ENCODE measurements at regions of chr9 and their contacts with region 1.

Region 1: DNA sequence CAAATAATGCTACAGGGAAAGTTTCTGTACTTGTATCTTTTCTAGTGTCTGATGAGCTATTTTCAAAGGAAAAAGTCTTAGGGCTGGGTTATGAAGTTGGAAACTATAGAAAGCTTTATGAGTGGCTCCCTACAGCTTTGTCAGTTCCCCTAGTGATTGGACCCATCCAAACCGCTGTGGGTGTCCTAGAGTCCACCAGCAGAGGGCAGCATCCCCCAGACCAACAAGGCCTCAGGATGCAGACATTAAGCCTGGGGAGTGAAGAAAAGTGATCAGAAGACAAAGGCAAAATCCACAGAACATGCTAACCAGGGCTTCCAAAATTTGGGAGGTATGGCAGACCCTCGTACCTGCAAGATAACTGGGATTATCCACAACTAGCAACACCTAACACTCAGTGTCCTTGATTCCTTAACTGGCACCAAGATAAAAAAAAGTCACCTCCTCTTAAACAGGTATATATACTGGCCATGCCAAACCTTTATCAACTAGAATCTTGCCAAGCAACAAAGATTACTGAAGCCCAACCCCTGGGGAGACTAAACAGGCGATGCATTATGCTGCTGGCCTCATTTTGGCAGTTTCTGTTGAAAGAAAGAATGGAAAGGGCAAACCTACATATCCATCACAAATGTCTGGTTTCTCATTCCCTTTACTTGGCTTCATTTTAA is 110.4 kb upstream of the NR5A1 start:
- DNase-seq: peak; percentile 86
- ATAC-seq: peak; percentile 88
- H3K4me3 Mint-ChIP-seq: no peak overlapping the region
- H3K27ac Mint-ChIP-seq: no peak overlapping the region
- H3K4me1 Mint-ChIP-seq: no peaks in the 10 kb centered on the region
- H3K27me3 Mint-ChIP-seq: peaks cover 5% of the 10 kb centered on the region
- CTCF ChIP-seq: peak; percentile 68

Region 2: GRCh38 chr9:124149992-124150391 is 467.6 kb before region 1 on chr9:
- CTCF ChIA-PET with region 1: no interaction called
- POLR2A ChIA-PET with region 1: no interaction called
- intact Hi-C with region 1: no loop called
- DNase-seq: no peak
- ATAC-seq: no peak
- H3K4me3 Mint-ChIP-seq: no peak overlapping the region
- H3K27ac Mint-ChIP-seq: no peak overlapping the region
- H3K4me1 Mint-ChIP-seq: peaks cover 5% of the 10 kb centered on the region
- H3K27me3 Mint-ChIP-seq: peaks cover 15% of the 10 kb centered on the region
- CTCF ChIP-seq: no peak

Region 3: GRCh38 chr9:124436320-124436719 is 181.3 kb before region 1 on chr9:
- CTCF ChIA-PET with region 1: no interaction called
- POLR2A ChIA-PET with region 1: no interaction called
- intact Hi-C with region 1: no loop called
- DNase-seq: no peak
- ATAC-seq: no peak
- H3K4me3 Mint-ChIP-seq: no peak overlapping the region
- H3K27ac Mint-ChIP-seq: no peak overlapping the region
- H3K4me1 Mint-ChIP-seq: no peaks in the 10 kb centered on the region
- H3K27me3 Mint-ChIP-seq: peaks cover 10% of the 10 kb centered on the region
- CTCF ChIP-seq: no peak

Region 4: DNA sequence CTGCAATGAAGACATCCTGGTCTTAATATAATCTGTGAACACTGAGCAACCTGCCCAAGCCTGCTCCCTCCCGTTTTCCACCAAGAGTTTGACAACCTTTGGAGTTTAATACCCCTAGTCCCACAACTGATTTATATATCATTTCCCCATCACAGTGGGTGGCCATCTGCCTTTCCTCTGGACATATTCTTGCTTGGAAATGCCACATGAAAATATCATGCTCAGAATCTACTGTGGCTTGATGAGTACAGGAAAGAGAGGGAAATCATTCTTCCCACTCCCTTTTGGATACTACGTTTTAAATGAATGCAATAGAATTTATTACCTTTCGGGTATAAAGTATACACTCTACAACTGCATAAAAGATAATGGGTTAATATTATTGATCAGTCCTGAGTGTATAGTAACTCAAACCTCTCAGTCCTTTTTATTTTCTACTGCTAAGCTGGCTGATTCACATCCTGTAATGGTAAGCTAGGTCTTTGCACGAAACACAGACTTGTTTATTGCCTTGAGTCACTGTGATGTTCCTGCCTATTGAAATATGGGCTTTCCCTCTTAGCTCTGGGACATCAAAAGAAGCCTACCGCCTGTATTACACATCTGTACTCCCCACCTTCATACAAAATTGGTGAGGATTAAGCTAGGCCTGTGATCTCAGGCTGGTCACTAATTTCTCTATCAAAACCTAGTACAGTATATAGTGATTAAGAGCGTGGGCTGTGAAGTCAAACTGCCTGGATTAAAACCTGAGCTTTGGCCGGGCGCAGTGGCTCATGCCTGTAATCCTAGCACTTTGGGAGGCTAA is 42.9 kb before region 1 on chr9:
- CTCF ChIA-PET with region 1: interaction called, 12 read pairs
- POLR2A ChIA-PET with region 1: no interaction called
- intact Hi-C with region 1: no loop called
- DNase-seq: no peak
- ATAC-seq: peak; percentile 58
- H3K4me3 Mint-ChIP-seq: no peak overlapping the region
- H3K27ac Mint-ChIP-seq: no peak overlapping the region
- H3K4me1 Mint-ChIP-seq: no peaks in the 10 kb centered on the region
- H3K27me3 Mint-ChIP-seq: peaks cover 2% of the 10 kb centered on the region
- CTCF ChIP-seq: no peak

Region 5: DNA sequence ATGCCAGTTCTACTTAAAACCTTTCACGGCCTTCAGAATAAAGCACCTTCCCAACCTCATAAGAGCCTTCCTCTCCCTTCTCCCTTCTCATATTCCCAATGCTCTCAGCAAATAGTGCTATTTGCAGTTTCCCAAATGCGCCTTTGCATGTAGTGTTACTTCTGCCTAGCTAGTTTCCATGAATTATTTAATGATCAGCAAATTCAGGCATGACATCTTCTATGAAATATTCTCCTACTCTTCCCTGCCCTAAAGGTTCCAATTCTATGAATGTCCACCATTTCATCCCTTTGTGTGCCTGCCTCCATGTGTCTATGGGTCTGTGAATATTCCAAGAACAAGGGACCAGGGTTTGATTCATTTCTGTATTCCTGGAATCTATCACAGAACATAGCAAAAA is 11.6 kb before region 1 on chr9:
- CTCF ChIA-PET with region 1: interaction called, 20 read pairs
- POLR2A ChIA-PET with region 1: no interaction called
- intact Hi-C with region 1: no loop called
- DNase-seq: no peak
- ATAC-seq: no peak
- H3K4me3 Mint-ChIP-seq: no peak overlapping the region
- H3K27ac Mint-ChIP-seq: no peak overlapping the region
- H3K4me1 Mint-ChIP-seq: no peaks in the 10 kb centered on the region
- H3K27me3 Mint-ChIP-seq: peaks cover 11% of the 10 kb centered on the region
- CTCF ChIP-seq: no peak

Region 6: DNA sequence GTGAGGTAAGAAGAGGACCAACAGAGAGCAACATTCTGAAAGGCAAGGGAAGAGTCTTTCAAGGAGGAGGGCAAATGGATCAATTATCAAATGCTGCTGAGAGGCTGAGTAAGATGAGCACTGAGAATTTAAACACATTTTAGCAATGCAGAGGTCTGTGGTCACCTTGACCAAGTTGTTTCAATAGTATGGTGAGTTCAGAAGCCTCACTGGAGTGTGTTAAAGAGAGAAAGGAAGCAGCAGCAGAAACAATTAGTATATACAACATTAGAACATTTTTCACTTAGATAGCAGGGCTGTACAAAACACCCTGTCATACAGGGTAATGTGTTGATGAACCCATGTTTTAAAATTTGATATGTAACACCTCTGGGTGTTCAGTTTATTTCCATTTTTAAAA is 22.0 kb after region 1 on chr9:
- CTCF ChIA-PET with region 1: interaction called, 16 read pairs
- POLR2A ChIA-PET with region 1: interaction called, 3 read pairs
- intact Hi-C with region 1: no loop called
- DNase-seq: no peak
- ATAC-seq: no peak
- H3K4me3 Mint-ChIP-seq: no peak overlapping the region
- H3K27ac Mint-ChIP-seq: no peak overlapping the region
- H3K4me1 Mint-ChIP-seq: no peaks in the 10 kb centered on the region
- H3K27me3 Mint-ChIP-seq: peaks cover 12% of the 10 kb centered on the region
- CTCF ChIP-seq: no peak

Region 7: GRCh38 chr9:124675261-124676158 is 57.9 kb after region 1 on chr9:
- CTCF ChIA-PET with region 1: interaction called, 13 read pairs
- POLR2A ChIA-PET with region 1: no interaction called
- intact Hi-C with region 1: no loop called
- DNase-seq: no peak
- ATAC-seq: no peak
- H3K4me3 Mint-ChIP-seq: no peak overlapping the region
- H3K27ac Mint-ChIP-seq: no peak overlapping the region
- H3K4me1 Mint-ChIP-seq: peaks cover 13% of the 10 kb centered on the region
- H3K27me3 Mint-ChIP-seq: no peaks in the 10 kb centered on the region
- CTCF ChIP-seq: no peak

Region 8: DNA sequence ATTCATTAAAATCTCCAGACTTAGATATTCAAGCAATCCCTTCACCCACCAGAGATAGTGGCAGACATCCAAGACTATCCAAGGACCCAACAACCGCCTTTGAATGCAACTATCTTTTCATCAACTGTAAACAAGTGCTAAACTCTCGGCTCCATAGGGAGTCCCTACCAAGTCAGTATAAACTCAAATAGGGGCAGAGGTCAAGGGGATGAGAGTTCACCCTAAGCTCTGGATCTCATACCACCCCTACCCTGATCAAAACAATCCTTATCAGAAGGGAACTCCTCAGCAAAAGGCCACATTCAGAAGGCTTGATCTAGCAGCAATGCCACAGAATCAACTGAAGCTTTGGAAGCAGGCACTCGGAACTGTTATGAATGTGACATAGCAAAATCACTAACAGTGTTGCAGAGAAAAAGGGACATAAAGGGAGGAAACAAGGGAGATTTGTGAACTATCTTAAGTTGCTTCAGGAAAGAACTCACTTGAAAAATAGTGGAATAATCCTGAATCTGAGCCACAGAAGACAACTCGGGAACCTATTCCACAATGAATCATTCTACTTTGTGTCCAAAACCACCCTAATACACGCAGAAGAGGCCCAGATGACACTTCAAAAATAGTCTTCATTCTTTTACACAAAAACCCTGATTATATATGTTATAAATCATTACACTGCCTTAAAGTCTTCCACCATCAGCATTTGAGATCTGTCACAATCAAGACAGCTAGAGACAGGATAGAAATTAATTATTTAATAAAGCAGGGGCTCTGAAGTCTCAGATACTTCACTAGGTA is 103.7 kb after region 1 on chr9:
- CTCF ChIA-PET with region 1: interaction called, 19 read pairs
- POLR2A ChIA-PET with region 1: no interaction called
- intact Hi-C with region 1: no loop called
- DNase-seq: no peak
- ATAC-seq: no peak
- H3K4me3 Mint-ChIP-seq: no peak overlapping the region
- H3K27ac Mint-ChIP-seq: no peak overlapping the region
- H3K4me1 Mint-ChIP-seq: peaks cover 8% of the 10 kb centered on the region
- H3K27me3 Mint-ChIP-seq: peaks cover 9% of the 10 kb centered on the region
- CTCF ChIP-seq: no peak

Region 9: GRCh38 chr9:124815601-124816000 is 198.0 kb after region 1 on chr9:
- CTCF ChIA-PET with region 1: no interaction called
- POLR2A ChIA-PET with region 1: no interaction called
- intact Hi-C with region 1: no loop called
- DNase-seq: no peak
- ATAC-seq: no peak
- H3K4me3 Mint-ChIP-seq: no peak overlapping the region
- H3K27ac Mint-ChIP-seq: no peak overlapping the region
- H3K4me1 Mint-ChIP-seq: peaks cover 7% of the 10 kb centered on the region
- H3K27me3 Mint-ChIP-seq: peaks cover 6% of the 10 kb centered on the region
- CTCF ChIP-seq: no peak

Region 10: DNA sequence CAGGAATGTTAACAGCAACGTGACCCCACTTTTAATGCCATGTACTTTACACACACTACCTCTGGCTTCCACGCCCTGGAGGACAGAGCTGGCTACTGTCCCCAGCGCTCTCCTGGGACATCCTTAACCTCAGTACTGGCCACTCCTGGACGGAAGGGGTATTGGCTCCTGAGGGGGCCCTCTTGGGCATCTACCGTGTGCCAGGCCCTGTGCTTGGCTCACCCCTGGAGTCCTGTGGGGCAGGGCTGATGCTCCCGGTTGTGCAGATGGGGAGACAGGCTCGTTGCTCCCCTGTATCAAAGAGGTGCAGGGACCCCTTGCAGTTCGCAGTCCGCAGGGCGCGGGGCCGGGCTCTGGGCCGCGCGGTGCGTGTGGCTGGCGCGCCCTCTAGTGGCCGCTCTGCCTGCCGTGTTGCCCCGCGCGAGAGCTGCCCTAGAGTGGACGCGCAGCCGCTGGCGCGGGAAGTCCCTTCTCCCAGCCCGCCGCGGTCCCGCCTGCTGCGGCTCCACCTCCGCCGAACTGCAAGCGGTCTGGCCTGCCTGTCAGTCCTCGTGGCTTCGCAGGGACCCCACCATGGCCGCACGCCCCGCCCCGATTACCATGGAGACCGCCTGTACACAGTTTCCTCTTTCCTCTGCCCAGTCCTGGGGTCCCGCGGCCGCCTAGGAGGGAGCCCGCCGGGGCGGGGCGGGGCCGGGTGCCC is 235.4 kb after region 1 on chr9 and contains the start of gene WDR38:
- CTCF ChIA-PET with region 1: interaction called, 18 read pairs
- POLR2A ChIA-PET with region 1: no interaction called
- intact Hi-C with region 1: no loop called
- DNase-seq: peak; percentile 91
- ATAC-seq: peak; percentile 81
- H3K4me3 Mint-ChIP-seq: peak within 1 kb of the TSS; percentile 46
- H3K27ac Mint-ChIP-seq: no peak within 1 kb of the TSS
- H3K4me1 Mint-ChIP-seq: peaks cover 20% of the 10 kb centered on the region
- H3K27me3 Mint-ChIP-seq: peaks cover 19% of the 10 kb centered on the region
- CTCF ChIP-seq: peak; percentile 100
- total RNA-seq, gene WDR38: not detected

Measured in activated CD8-positive, alpha-beta T cell treated with anti-CD3 and anti-CD28 coated beads for 36 hours (primary cell).